Right ventricle myocardium inferior (tissue), 1 donor: ENCODE measurements at regions of chr2 and their contacts with region 1.

Region 1: DNA sequence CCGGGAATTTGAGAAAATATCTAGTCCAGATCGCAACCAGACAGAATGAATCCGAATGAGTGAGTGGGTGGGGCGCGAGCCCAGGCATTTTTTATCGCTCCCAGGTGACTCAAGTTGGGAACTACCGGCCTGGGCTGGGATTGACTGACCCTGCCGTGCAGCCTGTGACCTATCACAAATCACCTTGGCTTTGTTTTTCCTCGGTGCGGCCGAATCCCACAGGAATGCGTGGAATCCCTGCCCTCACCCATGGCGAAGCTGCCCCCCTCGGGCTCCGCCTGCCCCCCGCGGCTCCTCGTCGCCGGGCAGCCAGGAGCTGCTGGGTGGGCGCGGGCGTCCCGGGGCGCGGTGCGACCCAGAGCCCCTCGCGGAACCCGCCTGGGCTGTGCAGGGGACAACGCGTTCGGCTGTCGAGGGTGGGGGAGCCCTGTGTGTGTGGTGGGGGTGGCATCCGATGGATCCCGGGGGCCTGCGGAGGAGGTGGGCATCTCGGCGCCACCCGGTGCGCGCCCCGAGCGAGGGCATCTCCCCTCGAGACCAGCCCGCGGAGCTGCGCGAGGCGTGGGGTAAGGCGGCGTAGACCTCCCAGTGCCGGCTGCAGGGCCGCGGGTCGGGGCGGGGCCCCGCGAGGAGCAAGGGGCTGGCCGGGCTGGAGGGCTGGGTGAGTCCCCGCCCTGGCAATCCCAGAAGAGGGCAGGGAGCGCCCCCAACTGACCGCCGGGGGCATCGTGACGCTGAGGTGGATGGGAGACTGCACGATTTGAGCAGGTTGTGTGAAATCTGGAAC is 16.5 kb downstream of the B3GNT7 start:
- DNase-seq: peak; percentile 85
- ATAC-seq: peak; percentile 98

Region 2: DNA sequence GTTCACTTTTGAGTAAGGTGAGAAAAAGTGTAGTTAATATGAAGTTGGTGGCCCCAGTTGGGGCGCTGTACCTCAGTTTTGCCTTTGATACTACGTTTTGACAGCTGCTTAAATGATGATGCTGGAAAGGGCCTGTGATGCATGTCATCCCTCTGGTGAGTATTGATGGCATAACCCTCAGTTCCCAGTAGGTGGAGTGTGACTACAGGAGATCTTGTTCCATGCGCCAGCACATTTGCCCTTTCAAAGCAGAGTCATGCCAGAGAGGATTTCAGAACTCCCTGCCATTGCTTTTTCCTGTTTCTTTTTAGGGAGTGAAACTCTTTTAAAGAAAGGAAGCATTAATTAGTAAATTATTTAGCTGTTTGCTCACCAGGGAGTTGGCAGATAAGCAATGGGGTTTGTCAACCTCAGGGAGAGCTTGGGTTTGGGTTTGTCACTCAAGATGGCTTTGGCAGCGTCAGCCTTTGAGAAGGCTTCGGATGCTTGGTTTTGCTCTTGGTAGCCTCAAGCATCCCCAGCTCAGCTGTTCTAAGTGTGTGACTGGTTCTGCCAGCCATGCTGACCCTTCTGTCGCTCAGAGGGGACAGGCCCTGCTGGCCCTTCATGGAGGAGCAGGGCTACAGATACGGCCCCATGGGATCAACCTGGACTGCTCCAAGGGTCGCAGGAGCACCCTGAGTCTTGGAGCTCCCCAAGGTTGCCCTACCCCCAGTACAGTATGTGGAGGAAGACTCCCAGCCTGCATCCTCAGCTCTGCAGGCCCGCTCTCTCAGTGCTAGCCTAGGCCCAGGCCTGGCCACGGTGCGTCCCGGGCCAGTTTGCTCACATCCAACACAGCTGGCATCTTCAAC is 184.5 kb before region 1 on chr2:
- intact Hi-C with region 1: loop called (anchors 1 kb)
- DNase-seq: no peak
- ATAC-seq: peak; percentile 93

Region 3: GRCh38 chr2:231245253-231246094 is 166.6 kb before region 1 on chr2:
- intact Hi-C with region 1: loop called (anchors 5 kb)
- DNase-seq: no peak
- ATAC-seq: no peak